ENCODE measurements at regions of chr18 and their contacts with region 1.

Region 1: DNA sequence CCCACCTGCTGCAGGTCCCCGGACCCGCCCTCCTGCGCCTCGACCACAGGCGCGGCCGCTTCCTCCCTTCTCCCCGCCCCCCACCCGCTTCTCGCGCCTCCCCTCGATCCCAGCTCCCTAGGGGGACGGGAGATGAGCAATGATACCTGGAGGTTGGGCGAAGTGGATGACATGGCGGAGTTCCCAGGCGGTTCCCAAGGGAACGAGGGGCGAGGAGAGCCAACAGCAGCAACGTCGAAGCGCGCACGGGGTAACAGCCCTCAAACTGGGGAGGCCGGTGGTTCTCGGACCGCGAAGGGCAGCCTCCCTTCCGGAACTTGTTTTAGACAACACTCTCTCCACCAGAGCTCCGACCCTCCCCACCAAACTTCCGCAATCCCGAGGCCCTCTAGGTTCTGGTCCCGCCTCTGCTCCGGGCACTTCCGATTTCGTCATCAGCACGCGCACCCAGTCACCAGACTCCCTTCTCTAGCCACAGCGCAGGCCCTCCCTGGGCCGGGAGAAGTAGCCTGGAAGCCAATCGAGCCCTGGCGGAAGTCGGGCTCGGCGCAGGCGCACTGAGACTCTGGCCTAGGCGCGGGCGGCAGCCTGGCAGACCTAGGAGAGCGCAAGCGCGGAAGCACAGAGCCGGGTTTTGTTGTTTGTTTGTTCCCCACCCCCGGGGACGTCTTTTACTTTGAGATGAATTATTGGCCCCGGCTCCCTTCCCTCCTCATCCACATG is at the start of gene VPS4B:
- DNase-seq: peak; percentile 100
- total RNA-seq, gene VPS4B: 46.2 to 47.3 TPM

Region 2: DNA sequence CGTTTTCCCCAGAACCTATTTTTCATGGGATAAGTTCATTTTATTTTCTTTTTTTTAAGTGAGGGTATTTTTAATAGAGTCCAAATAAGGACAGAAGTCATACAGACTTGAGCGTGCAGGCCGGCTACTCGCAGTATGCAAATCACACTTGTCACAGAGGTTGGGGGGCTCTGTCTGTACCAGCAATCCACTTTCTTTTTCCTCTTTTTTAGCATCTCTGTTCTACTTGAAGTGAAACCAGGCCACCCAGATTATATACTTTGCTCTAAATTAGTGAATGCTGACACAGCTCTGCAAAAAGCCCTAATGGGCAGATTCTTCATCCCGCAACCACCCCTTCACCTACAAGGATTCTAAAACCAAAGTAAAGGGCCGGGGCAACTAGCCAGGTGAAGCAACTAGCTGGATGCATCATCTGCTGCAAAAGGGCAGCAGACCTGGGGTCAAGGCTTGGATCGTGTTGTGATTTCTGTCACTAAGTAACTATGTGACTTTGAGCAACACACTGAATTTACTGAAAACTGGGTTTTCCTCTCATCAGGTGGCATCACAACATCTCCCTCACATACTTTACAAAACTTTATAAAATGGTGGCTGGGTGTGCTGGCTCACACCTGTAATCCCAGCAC is 73.6 kb before region 1 on chr18:
- intact Hi-C with region 1: loop called in 1 of 2 experiments (anchors 1 kb)
- DNase-seq: no peak

Region 3: GRCh38 chr18:63367053-63367953 is 54.9 kb before region 1 on chr18 and contains the start of gene KDSR:
- intact Hi-C with region 1: loop called in 1 of 2 experiments (anchors 10 kb)
- DNase-seq: peak; percentile 99
- total RNA-seq, gene KDSR: 54.2 to 78.7 TPM

Measured in posterior vena cava (tissue), 2 donors.